ENCODE measurements at regions of chr4 and their contacts with region 1.

Region 1: GRCh38 chr4:52588097-52588782 is 70.9 kb downstream of the USP46 start:
- DNase-seq: peak; percentile 67
- H3K4me3 ChIP-seq: no peak overlapping the region
- H3K27ac ChIP-seq: peak overlapping the region; percentile 96
- H3K4me1 ChIP-seq: peaks cover 17% of the 10 kb centered on the region
- H3K27me3 ChIP-seq: no peaks in the 10 kb centered on the region
- CTCF ChIP-seq: peak; percentile 55 to 73
- POLR2A ChIP-seq: no peak

Region 2: GRCh38 chr4:52329894-52330293 is 258.3 kb before region 1 on chr4:
- CTCF ChIA-PET with region 1: no interaction called
- POLR2A ChIA-PET with region 1: no interaction called
- dilution Hi-C with region 1: no loop called
- intact Hi-C with region 1: no loop called
- DNase-seq: no peak
- H3K4me3 ChIP-seq: no peak overlapping the region
- H3K27ac ChIP-seq: no peak overlapping the region
- H3K4me1 ChIP-seq: no peaks in the 10 kb centered on the region
- H3K27me3 ChIP-seq: no peaks in the 10 kb centered on the region
- CTCF ChIP-seq: no peak
- POLR2A ChIP-seq: no peak

Region 3: GRCh38 chr4:52659001-52659721 is 70.9 kb after region 1 on chr4 and contains the start of gene USP46:
- CTCF ChIA-PET with region 1: interaction called, 23 read pairs
- POLR2A ChIA-PET with region 1: no interaction called
- dilution Hi-C with region 1: no loop called
- intact Hi-C with region 1: loop called (anchors 1 kb)
- DNase-seq: peak; percentile 66
- H3K4me3 ChIP-seq: peak within 1 kb of the TSS; percentile 80 to 90 (median 88)
- H3K27ac ChIP-seq: peak within 1 kb of the TSS; percentile 86
- H3K4me1 ChIP-seq: peaks cover 13% of the 10 kb centered on the region
- H3K27me3 ChIP-seq: no peaks in the 10 kb centered on the region
- CTCF ChIP-seq: no peak
- POLR2A ChIP-seq: peak; percentile 85
- total RNA-seq, gene USP46: 23.3 and 23.7 TPM in 2 replicates

Region 4: GRCh38 chr4:52712172-52712990 is 124.1 kb after region 1 on chr4:
- CTCF ChIA-PET with region 1: interaction called, 15 read pairs
- POLR2A ChIA-PET with region 1: interaction called, 3 read pairs
- dilution Hi-C with region 1: no loop called
- intact Hi-C with region 1: loop called (anchors 1 kb)
- DNase-seq: peak; percentile 97
- H3K4me3 ChIP-seq: peak overlapping the region; percentile 61 to 86 (median 76)
- H3K27ac ChIP-seq: peak overlapping the region; percentile 73
- H3K4me1 ChIP-seq: peaks cover 30% of the 10 kb centered on the region
- H3K27me3 ChIP-seq: peaks cover 0 to 5% of the 10 kb centered on the region in 2 experiments
- CTCF ChIP-seq: no peak
- POLR2A ChIP-seq: peak; percentile 97

Region 5: DNA sequence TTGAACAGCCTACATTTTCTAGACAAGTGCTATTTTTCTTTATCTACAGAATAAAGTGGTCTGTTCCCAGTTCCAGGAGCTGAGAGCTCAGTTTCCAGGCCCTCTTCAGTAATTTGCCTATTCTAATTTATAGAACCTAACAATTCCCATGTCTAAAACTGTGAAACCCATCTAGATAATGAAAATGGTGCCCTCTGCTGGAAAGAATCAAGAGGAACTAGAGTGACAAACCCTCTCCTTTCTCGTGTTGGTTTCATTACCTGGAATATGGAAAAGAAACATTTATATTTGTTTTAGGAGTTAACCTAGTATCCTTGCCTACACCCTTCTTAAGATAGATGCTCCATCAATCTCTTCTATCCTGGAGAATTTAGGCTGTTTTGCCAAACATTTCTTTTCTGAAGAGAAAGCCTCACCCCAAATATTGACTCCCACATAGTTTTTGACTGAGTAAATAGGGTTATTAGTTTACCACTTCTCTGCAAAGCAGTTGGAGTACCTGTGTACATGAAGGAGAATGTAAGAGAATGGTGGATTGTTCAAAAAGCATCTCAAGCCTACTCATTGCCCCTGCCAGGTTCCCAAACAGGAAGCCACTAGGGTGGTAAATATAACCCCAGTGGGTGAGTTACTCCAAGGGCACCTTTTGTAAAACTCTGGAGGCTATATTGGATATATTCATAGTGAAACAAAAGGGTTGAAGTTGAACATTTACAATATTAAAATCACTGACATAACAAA is 395.5 kb after region 1 on chr4:
- CTCF ChIA-PET with region 1: interaction called, 35 read pairs
- POLR2A ChIA-PET with region 1: no interaction called
- dilution Hi-C with region 1: no loop called
- intact Hi-C with region 1: loop called (anchors 1 kb)
- DNase-seq: peak; percentile 64
- H3K4me3 ChIP-seq: no peak overlapping the region
- H3K27ac ChIP-seq: no peak overlapping the region
- H3K4me1 ChIP-seq: no peaks in the 10 kb centered on the region
- H3K27me3 ChIP-seq: no peaks in the 10 kb centered on the region
- CTCF ChIP-seq: peak; percentile 38 to 44
- POLR2A ChIP-seq: no peak